Kidney (tissue), 22 donors: ENCODE measurements at regions of chr3 and their contacts with region 1.

Region 1: GRCh38 chr3:57227204-57227929 is at the start of gene APPL1:
- DNase-seq: peak; percentile 95 to 98 (median 97)
- H3K4me3 ChIP-seq: peak within 1 kb of the TSS; percentile 73 to 97 (median 88)
- H3K27ac ChIP-seq: peak within 1 kb of the TSS; percentile 92 to 93
- H3K4me1 ChIP-seq: peaks cover 0 to 4% (median 0%) of the 10 kb centered on the region in 3 donors
- H3K27me3 ChIP-seq: no peaks in the 10 kb centered on the region
- CTCF ChIP-seq: no peak
- total RNA-seq, gene APPL1: 48.2 TPM

Region 2: GRCh38 chr3:56878074-56878473 is 349.3 kb before region 1 on chr3:
- intact Hi-C with region 1: no loop called
- DNase-seq: peak in 4 of 5 donors; percentile 58 to 87 (median 76)
- H3K4me3 ChIP-seq: no peak overlapping the region
- H3K27ac ChIP-seq: peak overlapping the region in 1 of 2 donors; percentile 20
- H3K4me1 ChIP-seq: no peaks in the 10 kb centered on the region
- H3K27me3 ChIP-seq: no peaks in the 10 kb centered on the region
- CTCF ChIP-seq: no peak

Region 3: GRCh38 chr3:57094575-57094974 is 132.8 kb before region 1 on chr3:
- intact Hi-C with region 1: loop called (anchors 10 kb)
- DNase-seq: peak in 2 of 5 donors; percentile 27 to 53
- H3K4me3 ChIP-seq: no peak overlapping the region
- H3K27ac ChIP-seq: no peak overlapping the region
- H3K4me1 ChIP-seq: peaks cover 0 to 3% (median 0%) of the 10 kb centered on the region in 3 donors
- H3K27me3 ChIP-seq: no peaks in the 10 kb centered on the region
- CTCF ChIP-seq: no peak

Region 4: DNA sequence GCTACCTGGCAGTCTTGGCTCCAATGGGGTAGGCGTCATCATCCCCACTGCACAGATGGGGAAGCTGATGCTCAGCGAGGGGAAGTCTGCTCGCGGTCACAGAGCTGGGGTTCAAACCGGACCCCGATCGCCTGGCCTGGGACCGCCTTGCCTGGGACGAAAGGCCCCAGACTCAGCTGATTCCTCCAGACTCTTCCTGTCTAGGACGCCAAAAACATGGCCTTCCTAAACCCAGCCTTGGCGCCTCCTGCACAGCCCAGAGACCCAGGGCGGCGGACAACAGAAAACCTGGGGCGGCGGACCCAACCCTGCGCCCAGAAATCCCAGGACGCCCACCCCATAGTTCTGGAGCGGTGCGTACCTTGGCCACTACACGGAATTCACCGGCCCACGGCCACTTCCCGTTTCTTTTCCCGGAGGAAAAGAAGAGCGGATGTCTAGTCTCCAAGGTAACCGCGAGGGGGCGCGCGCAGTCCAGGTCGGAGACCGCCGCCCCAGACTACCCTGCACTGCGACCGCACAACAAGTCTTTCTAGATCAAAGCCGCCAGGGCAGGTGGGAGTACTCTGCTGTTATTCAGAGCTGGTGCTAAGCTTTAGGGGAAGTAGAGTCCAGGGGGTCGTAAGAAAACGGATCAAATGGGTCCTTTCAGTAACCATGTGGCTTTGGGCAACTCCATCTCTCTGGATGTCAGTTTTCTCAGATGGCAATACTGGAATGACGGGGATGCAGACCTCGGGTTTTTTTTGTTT is 57.3 kb before region 1 on chr3:
- intact Hi-C with region 1: no loop called
- DNase-seq: peak; percentile 85 to 94 (median 91)
- H3K4me3 ChIP-seq: peak overlapping the region; percentile 17 to 72 (median 59)
- H3K27ac ChIP-seq: no peak overlapping the region
- H3K4me1 ChIP-seq: peaks cover 0 to 13% (median 9%) of the 10 kb centered on the region in 3 donors
- H3K27me3 ChIP-seq: no peaks in the 10 kb centered on the region
- CTCF ChIP-seq: peak; percentile 84